OCI-LY7 (cell line): ENCODE measurements at regions of chr5 and their contacts with region 1.

Region 1: GRCh38 chr5:53481887-53482716 is 1.7 kb downstream of the FST start:
- DNase-seq: peak; percentile 23
- H3K4me3 ChIP-seq: peak overlapping the region; percentile 56
- H3K27ac ChIP-seq: no peak overlapping the region
- H3K4me1 ChIP-seq: peaks cover 6% of the 10 kb centered on the region
- CTCF ChIP-seq: no peak

Region 2: GRCh38 chr5:53249529-53250200 is 232.4 kb before region 1 on chr5:
- CTCF ChIA-PET with region 1: no interaction called
- POLR2A ChIA-PET with region 1: no interaction called
- intact Hi-C with region 1: no loop called
- DNase-seq: no peak
- H3K4me3 ChIP-seq: no peak overlapping the region
- H3K27ac ChIP-seq: no peak overlapping the region
- H3K4me1 ChIP-seq: no peaks in the 10 kb centered on the region
- CTCF ChIP-seq: no peak

Region 3: DNA sequence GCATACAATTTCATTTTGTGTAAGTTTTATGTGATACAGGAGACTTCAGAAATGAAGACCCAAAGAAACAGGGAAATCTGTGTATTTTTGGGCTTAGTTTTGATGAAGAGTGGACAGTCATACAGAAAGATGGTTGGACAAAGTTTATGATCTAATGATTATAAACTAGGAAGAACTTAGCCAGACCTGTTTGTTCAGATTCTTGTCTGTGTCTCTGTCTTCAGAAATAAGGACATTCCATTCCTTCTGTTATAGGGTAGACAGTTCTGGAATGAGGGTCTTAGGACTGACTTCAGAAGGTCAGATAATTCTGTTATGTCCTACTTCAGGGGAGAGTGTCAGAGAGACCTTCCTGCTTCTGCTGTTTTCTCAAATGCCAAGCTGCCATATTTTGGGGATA is 168.3 kb after region 1 on chr5:
- CTCF ChIA-PET with region 1: no interaction called
- POLR2A ChIA-PET with region 1: no interaction called
- intact Hi-C with region 1: loop called (anchors 10 kb)
- DNase-seq: no peak
- H3K4me3 ChIP-seq: no peak overlapping the region
- H3K27ac ChIP-seq: no peak overlapping the region
- H3K4me1 ChIP-seq: no peaks in the 10 kb centered on the region
- CTCF ChIP-seq: no peak

Region 4: GRCh38 chr5:54217826-54218503 is 735.9 kb after region 1 on chr5:
- CTCF ChIA-PET with region 1: no interaction called
- POLR2A ChIA-PET with region 1: no interaction called
- intact Hi-C with region 1: loop called (anchors 2 kb)
- DNase-seq: peak; percentile 47
- H3K4me3 ChIP-seq: no peak overlapping the region
- H3K27ac ChIP-seq: no peak overlapping the region
- H3K4me1 ChIP-seq: peaks cover 5% of the 10 kb centered on the region
- CTCF ChIP-seq: peak; percentile 85

Region 5: GRCh38 chr5:54229041-54229780 is 747.1 kb after region 1 on chr5:
- CTCF ChIA-PET with region 1: no interaction called
- POLR2A ChIA-PET with region 1: no interaction called
- intact Hi-C with region 1: loop called (anchors 2 kb)
- DNase-seq: peak; percentile 69
- H3K4me3 ChIP-seq: no peak overlapping the region
- H3K27ac ChIP-seq: no peak overlapping the region
- H3K4me1 ChIP-seq: peaks cover 6% of the 10 kb centered on the region
- CTCF ChIP-seq: peak; percentile 99